ENCODE measurements at regions of chr1 and their contacts with region 1.

Region 1: GRCh38 chr1:183635606-183636333 is at the start of gene ARPC5:
- DNase-seq: peak; percentile 91 to 99 (median 94)
- ATAC-seq: peak; percentile 88
- H3K4me3 ChIP-seq: peak within 1 kb of the TSS; percentile 93
- H3K4me3 Mint-ChIP-seq: peak within 1 kb of the TSS; percentile 100
- H3K27ac ChIP-seq: peak within 1 kb of the TSS; percentile 61 to 86
- H3K27ac Mint-ChIP-seq: peak within 1 kb of the TSS; percentile 94
- H3K4me1 ChIP-seq: peaks cover 17% of the 10 kb centered on the region
- H3K4me1 Mint-ChIP-seq: peaks cover 51% of the 10 kb centered on the region
- H3K27me3 ChIP-seq: no peaks in the 10 kb centered on the region
- H3K27me3 Mint-ChIP-seq: no peaks in the 10 kb centered on the region
- CTCF ChIP-seq: no peak
- total RNA-seq, gene ARPC5: 21.4 to 23.0 TPM

Region 2: DNA sequence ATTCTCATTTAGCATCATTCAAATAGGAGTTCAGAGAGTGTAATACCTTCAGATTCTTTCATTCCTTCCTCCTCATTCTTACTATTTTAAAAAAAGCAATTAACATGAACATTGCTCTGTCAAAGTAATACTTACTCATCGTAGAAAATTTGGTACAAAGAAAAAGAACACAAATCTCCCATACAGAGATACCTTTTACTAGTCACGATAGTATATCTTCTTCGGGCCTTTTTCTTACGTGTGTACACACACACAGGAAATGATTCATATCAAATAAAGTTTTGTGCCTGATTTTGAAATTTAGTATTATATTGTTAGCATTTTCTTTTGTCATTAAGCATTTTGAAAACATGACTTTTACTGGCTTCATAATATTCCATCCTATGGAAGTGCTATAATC is 98.4 kb before region 1 on chr1:
- CTCF ChIA-PET with region 1: no interaction called
- POLR2A ChIA-PET with region 1: no interaction called
- intact Hi-C with region 1: no loop called
- DNase-seq: no peak
- ATAC-seq: no peak
- H3K4me3 ChIP-seq: no peak overlapping the region
- H3K4me3 Mint-ChIP-seq: no peak overlapping the region
- H3K27ac ChIP-seq: no peak overlapping the region
- H3K27ac Mint-ChIP-seq: peak overlapping the region; percentile 59
- H3K4me1 ChIP-seq: no peaks in the 10 kb centered on the region
- H3K4me1 Mint-ChIP-seq: no peaks in the 10 kb centered on the region
- H3K27me3 ChIP-seq: no peaks in the 10 kb centered on the region
- H3K27me3 Mint-ChIP-seq: no peaks in the 10 kb centered on the region
- CTCF ChIP-seq: no peak

Region 3: DNA sequence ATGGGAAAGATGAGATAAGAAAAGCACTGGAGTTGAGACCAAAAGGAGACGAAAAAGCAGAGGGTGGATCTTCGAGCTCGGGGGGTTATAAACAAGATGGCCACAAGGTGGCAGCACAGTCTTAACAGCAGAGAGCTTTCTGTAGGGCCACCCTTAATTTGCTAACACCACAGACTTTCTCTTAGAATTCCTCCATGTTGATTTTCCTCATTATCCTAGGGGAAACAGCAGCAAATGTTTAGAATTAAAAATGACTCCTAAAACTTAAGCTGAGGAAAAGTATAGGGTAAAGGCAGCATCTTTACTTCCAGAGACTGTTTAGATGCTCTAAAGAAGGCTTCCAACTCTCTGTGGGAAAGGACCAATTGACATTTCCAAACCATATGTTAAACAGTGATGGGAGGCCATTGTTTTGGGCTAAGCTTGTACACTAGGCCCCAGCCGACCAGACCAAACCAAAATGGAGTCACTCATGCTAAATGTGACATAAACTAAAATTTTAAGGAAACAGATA is 19.8 kb after region 1 on chr1:
- CTCF ChIA-PET with region 1: interaction called, 12 read pairs
- POLR2A ChIA-PET with region 1: interaction called, 6 read pairs
- intact Hi-C with region 1: loop called (anchors 2 kb)
- DNase-seq: peak; percentile 50 to 87 (median 70)
- ATAC-seq: peak; percentile 70
- H3K4me3 ChIP-seq: no peak overlapping the region
- H3K4me3 Mint-ChIP-seq: no peak overlapping the region
- H3K27ac ChIP-seq: no peak overlapping the region
- H3K27ac Mint-ChIP-seq: no peak overlapping the region
- H3K4me1 ChIP-seq: peaks cover 28% of the 10 kb centered on the region
- H3K4me1 Mint-ChIP-seq: peaks cover 40% of the 10 kb centered on the region
- H3K27me3 ChIP-seq: no peaks in the 10 kb centered on the region
- H3K27me3 Mint-ChIP-seq: no peaks in the 10 kb centered on the region
- CTCF ChIP-seq: peak; percentile 85

Region 4: GRCh38 chr1:183922197-183922596 is 286.4 kb after region 1 on chr1:
- CTCF ChIA-PET with region 1: no interaction called
- POLR2A ChIA-PET with region 1: no interaction called
- intact Hi-C with region 1: no loop called
- DNase-seq: no peak
- ATAC-seq: no peak
- H3K4me3 ChIP-seq: no peak overlapping the region
- H3K4me3 Mint-ChIP-seq: no peak overlapping the region
- H3K27ac ChIP-seq: no peak overlapping the region
- H3K27ac Mint-ChIP-seq: no peak overlapping the region
- H3K4me1 ChIP-seq: no peaks in the 10 kb centered on the region
- H3K4me1 Mint-ChIP-seq: no peaks in the 10 kb centered on the region
- H3K27me3 ChIP-seq: no peaks in the 10 kb centered on the region
- H3K27me3 Mint-ChIP-seq: no peaks in the 10 kb centered on the region
- CTCF ChIP-seq: no peak

Region 5: GRCh38 chr1:184734980-184735379 is 1099.2 kb after region 1 on chr1:
- CTCF ChIA-PET with region 1: no interaction called
- POLR2A ChIA-PET with region 1: no interaction called
- intact Hi-C with region 1: loop called in 1 of 2 experiments (anchors 5 kb)
- DNase-seq: no peak
- ATAC-seq: no peak
- H3K4me3 ChIP-seq: no peak overlapping the region
- H3K4me3 Mint-ChIP-seq: no peak overlapping the region
- H3K27ac ChIP-seq: no peak overlapping the region
- H3K27ac Mint-ChIP-seq: no peak overlapping the region
- H3K4me1 ChIP-seq: no peaks in the 10 kb centered on the region
- H3K4me1 Mint-ChIP-seq: peaks cover 34% of the 10 kb centered on the region
- H3K27me3 ChIP-seq: no peaks in the 10 kb centered on the region
- H3K27me3 Mint-ChIP-seq: no peaks in the 10 kb centered on the region
- CTCF ChIP-seq: no peak

Region 6: DNA sequence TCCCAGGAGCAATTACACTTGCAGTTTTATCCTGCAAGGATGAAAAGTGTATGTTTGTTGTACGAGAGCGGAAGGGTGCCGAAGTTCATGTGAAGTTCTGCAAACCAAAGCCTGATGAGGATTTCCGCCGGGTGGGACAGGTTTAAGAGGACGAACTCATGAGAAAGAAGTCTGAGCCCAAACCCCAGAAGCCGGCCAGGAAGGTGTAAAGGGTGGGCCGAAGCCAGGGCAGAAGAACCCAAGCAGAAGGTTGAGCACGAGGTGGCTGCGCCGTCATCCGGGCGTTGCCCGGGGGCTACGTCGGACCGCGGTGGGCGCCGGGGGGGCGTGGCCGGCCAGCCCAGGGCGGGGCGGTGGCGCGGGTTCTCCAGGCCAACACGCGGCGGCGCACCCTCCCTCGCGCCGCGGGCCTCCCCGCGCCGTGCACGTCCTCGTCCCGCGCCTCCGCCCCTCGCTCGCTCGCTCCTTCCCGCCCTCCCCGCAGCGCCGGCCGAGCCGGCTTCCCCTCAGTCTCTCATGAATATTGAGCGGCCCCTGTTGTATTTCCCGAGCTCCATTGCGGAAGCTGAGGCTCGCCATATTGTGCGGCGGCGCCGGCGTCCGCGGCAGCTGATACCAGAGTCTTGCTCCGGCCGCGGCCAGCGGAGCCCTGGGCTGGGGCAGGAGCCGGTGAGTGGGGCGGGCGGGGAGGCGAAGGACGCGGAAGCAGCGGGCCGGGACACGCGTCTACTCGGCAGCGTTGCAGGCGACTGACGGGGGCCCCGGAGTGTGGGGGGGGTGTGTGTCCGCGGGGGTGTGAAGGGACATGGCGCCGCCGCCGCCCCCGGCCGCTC is 1409.4 kb after region 1 on chr1 and contains the start of gene RNF2:
- CTCF ChIA-PET with region 1: no interaction called
- POLR2A ChIA-PET with region 1: no interaction called
- intact Hi-C with region 1: loop called in 1 of 2 experiments (anchors 10 kb)
- DNase-seq: peak; percentile 62 to 94 (median 76)
- ATAC-seq: peak; percentile 90
- H3K4me3 ChIP-seq: peak within 1 kb of the TSS; percentile 80
- H3K4me3 Mint-ChIP-seq: peak within 1 kb of the TSS; percentile 94
- H3K27ac ChIP-seq: peak within 1 kb of the TSS; percentile 70 to 72
- H3K27ac Mint-ChIP-seq: peak within 1 kb of the TSS; percentile 77
- H3K4me1 ChIP-seq: peaks cover 13% of the 10 kb centered on the region
- H3K4me1 Mint-ChIP-seq: peaks cover 59% of the 10 kb centered on the region
- H3K27me3 ChIP-seq: no peaks in the 10 kb centered on the region
- H3K27me3 Mint-ChIP-seq: no peaks in the 10 kb centered on the region
- CTCF ChIP-seq: peak; percentile 15
- total RNA-seq, gene RNF2: 7.4 to 9.0 TPM

Measured in CD4-positive, alpha-beta T cell (primary cell).